Natural killer cell (primary cell): ENCODE measurements at regions of chr7 and their contacts with region 1.

Region 1: GRCh38 chr7:124856299-124856888 is 73.2 kb downstream of the POT1 start:
- DNase-seq: peak in 1 of 2 donors; percentile 48
- ATAC-seq: peak in 1 of 3 donors; percentile 41
- H3K4me3 ChIP-seq: no peak overlapping the region
- H3K4me3 Mint-ChIP-seq: no peak overlapping the region
- H3K27ac ChIP-seq: no peak overlapping the region
- H3K27ac Mint-ChIP-seq: no peak overlapping the region
- H3K4me1 ChIP-seq: no peaks in the 10 kb centered on the region
- H3K4me1 Mint-ChIP-seq: peaks cover 0 to 5% of the 10 kb centered on the region in 2 donors
- H3K27me3 ChIP-seq: no peaks in the 10 kb centered on the region
- H3K27me3 Mint-ChIP-seq: no peaks in the 10 kb centered on the region
- CTCF ChIP-seq: peak; percentile 70

Region 2: GRCh38 chr7:123682690-123683089 is 1173.7 kb before region 1 on chr7:
- intact Hi-C with region 1: loop called (anchors 5 kb)
- DNase-seq: peak in 1 of 2 donors; percentile 65
- ATAC-seq: peak in 1 of 3 donors; percentile 45
- H3K4me3 ChIP-seq: no peak overlapping the region
- H3K4me3 Mint-ChIP-seq: no peak overlapping the region
- H3K27ac ChIP-seq: no peak overlapping the region
- H3K27ac Mint-ChIP-seq: no peak overlapping the region
- H3K4me1 ChIP-seq: no peaks in the 10 kb centered on the region
- H3K4me1 Mint-ChIP-seq: no peaks in the 10 kb centered on the region
- H3K27me3 ChIP-seq: no peaks in the 10 kb centered on the region
- H3K27me3 Mint-ChIP-seq: no peaks in the 10 kb centered on the region
- CTCF ChIP-seq: peak; percentile 55